Caco-2 (cell line): ENCODE measurements at regions of chr20 and their contacts with region 1.

Region 1: GRCh38 chr20:62477669-62478455 is 2.1 kb upstream of the GATA5 start:
- DNase-seq: peak; percentile 81 to 86
- H3K4me3 ChIP-seq: no peak overlapping the region
- H3K4me3 Mint-ChIP-seq: no peak overlapping the region
- H3K27ac Mint-ChIP-seq: peak overlapping the region; percentile 72
- H3K4me1 ChIP-seq: peaks cover 57% of the 10 kb centered on the region
- H3K4me1 Mint-ChIP-seq: peaks cover 39% of the 10 kb centered on the region
- H3K27me3 ChIP-seq: no peaks in the 10 kb centered on the region
- H3K27me3 Mint-ChIP-seq: no peaks in the 10 kb centered on the region
- CTCF ChIP-seq: peak; percentile 88 to 96

Region 2: DNA sequence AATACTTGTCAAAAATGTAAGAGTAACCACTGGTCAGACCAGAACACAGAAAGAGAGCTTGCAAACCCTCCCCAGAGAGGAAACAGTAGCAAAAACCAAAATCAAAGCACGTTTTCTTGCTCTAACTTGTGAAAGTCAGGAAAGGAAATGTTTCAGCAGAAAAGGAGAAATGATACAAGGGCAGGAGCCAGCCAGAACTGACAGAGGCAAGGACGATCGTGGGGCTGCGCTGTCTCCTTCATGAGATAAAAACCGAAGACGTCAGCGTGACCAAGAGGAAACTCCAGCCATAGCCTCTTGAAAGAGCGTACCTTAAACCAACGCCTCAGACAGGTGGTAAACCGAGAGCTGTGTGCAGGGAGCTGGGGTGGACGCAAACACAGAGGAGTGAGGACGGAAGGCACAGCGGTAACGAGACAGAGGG is 138.2 kb before region 1 on chr20:
- CTCF ChIA-PET with region 1: no interaction called
- POLR2A ChIA-PET with region 1: no interaction called
- intact Hi-C with region 1: no loop called
- DNase-seq: no peak
- H3K4me3 ChIP-seq: no peak overlapping the region
- H3K4me3 Mint-ChIP-seq: no peak overlapping the region
- H3K27ac Mint-ChIP-seq: peak overlapping the region; percentile 40
- H3K4me1 ChIP-seq: no peaks in the 10 kb centered on the region
- H3K4me1 Mint-ChIP-seq: peaks cover 6% of the 10 kb centered on the region
- H3K27me3 ChIP-seq: no peaks in the 10 kb centered on the region
- H3K27me3 Mint-ChIP-seq: no peaks in the 10 kb centered on the region
- CTCF ChIP-seq: no peak

Region 3: DNA sequence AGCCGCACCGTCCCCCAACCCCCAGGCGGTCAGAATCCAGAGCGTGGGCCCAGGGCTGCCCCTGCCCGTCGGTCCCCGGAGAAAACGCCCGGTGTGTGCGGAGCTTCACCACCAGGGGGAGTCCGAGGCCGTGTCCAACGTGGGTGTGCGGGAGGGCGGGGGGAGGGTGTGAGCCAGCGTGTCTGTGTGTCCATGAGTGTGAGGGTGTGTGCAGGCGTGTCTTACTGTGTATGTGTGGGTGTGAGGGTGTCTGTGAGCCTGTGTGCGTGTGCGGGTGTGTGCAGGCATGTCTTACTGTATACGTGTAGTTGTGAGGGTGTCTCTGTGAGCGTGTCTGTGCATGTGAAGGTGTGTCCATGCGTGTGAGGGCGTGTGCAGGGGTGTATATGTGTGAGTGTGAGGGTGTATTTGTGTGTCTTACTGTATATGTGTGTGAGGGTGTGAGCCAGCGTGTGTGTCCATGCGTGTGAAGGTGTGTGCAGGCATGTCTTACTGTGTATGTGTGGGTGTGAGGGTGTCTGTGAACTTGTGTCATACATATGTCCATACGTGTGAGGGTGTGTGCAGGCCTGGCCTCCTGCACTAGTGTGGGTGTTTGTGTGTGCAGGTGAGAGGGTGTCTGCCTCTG is 22.5 kb after region 1 on chr20:
- CTCF ChIA-PET with region 1: interaction called, 16 read pairs
- POLR2A ChIA-PET with region 1: no interaction called
- intact Hi-C with region 1: loop called (anchors 1 kb)
- DNase-seq: peak in 1 of 2 experiments; percentile 81
- H3K4me3 ChIP-seq: no peak overlapping the region
- H3K4me3 Mint-ChIP-seq: no peak overlapping the region
- H3K27ac Mint-ChIP-seq: no peak overlapping the region
- H3K4me1 ChIP-seq: peaks cover 17% of the 10 kb centered on the region
- H3K4me1 Mint-ChIP-seq: no peaks in the 10 kb centered on the region
- H3K27me3 ChIP-seq: no peaks in the 10 kb centered on the region
- H3K27me3 Mint-ChIP-seq: no peaks in the 10 kb centered on the region
- CTCF ChIP-seq: peak; percentile 81 to 89

Region 4: GRCh38 chr20:62583420-62583920 is 105.6 kb after region 1 on chr20:
- CTCF ChIA-PET with region 1: interaction called, 20 read pairs
- POLR2A ChIA-PET with region 1: no interaction called
- intact Hi-C with region 1: loop called (anchors 1 kb)
- DNase-seq: peak in 1 of 2 experiments; percentile 69
- H3K4me3 ChIP-seq: no peak overlapping the region
- H3K4me3 Mint-ChIP-seq: no peak overlapping the region
- H3K27ac Mint-ChIP-seq: no peak overlapping the region
- H3K4me1 ChIP-seq: no peaks in the 10 kb centered on the region
- H3K4me1 Mint-ChIP-seq: peaks cover 6% of the 10 kb centered on the region
- H3K27me3 ChIP-seq: no peaks in the 10 kb centered on the region
- H3K27me3 Mint-ChIP-seq: peaks cover 21% of the 10 kb centered on the region
- CTCF ChIP-seq: peak; percentile 33 to 76